ENCODE measurements at regions of chr1 and their contacts with region 1.

Region 1: GRCh38 chr1:27556781-27557595 is 47.0 kb downstream of the AHDC1 start:
- DNase-seq: peak; percentile 93

Region 2: DNA sequence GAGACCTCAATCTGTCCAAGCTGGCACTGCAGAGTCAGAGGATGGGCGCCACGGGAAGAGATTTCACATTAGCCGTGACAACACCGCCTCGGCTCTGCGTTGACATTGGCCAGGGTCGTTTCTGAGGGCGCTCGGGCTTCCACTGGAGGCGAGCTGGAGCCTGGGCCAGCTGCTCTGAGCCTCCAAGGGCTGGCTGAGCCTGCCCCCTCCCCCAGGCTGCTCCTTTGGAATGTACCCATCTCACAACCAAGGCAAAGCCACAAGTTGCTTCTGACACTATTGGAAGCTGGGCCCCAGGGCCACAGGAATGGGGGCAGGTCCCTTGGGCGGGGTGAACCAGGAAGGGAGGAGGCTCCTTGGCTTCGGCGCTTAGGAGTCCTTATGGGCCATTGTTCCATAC is 151.9 kb before region 1 on chr1:
- intact Hi-C with region 1: loop called (anchors 2 kb)
- DNase-seq: no peak

Region 3: GRCh38 chr1:27416387-27417111 is 140.4 kb before region 1 on chr1:
- intact Hi-C with region 1: loop called (anchors 2 kb)
- DNase-seq: no peak

Region 4: DNA sequence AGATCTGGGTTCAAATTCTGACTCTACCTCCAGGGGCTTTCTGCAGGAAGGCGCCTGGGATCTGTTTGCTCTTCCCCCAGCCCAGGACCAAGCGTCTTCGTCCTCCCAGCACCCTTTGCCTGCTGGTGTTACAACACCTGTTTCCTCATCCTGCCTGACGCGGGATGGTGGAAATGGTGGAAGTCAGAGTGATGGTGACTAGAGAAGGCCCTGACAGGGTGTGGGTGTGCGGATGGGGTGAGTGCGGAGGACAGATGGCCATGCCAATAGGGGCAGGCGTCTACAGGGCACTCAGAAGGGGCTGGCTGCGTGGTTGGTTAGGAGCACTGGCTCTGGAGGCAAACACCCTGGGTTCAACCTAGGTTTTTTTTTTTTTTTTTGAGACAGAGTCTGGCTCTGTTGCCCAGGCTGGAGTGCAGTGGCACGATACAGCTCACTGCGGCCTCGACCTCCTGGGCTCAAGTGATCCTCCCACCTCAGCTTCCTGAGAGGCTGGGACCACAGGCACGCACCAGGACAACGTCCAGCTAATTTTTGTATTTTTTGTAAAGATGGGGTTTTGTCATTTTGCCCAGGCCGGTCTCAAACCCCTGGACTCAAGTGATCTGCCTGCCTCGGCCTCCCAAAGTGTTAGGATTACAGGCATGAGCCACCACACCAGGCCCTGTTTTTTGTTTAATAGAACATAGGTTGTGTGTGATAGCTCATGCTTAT is 316.8 kb after region 1 on chr1:
- intact Hi-C with region 1: no loop called
- DNase-seq: peak; percentile 90

Measured in cardiac septum (tissue), 1 donor.